CD14-positive monocyte (primary cell): ENCODE measurements at regions of chr13 and their contacts with region 1.

Region 1: DNA sequence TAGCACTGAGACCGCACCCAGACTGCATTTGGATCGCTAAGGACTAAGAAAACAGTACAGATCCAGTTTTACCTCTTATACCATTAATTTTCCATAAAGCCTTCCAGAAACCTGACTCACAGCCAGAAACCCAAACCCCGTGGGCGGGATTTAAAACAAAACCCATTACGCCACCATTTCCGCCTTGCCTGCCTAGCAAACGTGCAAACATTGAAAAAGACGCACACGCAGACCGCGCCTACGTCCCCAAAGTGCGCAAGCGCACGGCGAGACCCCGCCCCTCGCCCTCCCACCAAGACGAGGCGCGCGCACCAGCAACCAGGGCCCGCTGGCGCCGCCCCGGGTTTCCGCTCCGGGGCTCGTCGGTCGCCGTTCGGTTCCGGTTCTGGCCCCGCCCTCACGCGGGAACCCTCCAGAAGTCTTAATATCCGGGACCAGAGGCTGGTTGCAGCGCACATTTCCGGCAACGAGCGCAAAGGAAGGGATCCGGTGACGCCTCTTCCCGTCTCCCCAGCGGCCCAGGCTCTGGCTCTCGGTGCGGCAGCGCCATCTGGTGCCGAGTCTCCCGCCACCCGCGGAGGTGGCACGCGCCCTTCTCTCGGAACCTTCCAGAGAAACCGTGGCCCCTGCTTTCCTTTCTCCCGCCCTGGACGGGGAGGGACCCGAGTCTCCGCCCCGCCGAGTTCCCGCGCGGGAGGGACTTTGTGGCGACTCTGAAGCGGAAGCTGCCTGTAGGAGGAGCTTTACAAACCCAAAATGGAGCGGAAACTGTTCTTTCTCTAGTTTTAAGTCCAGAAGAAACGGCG is 256.9 kb upstream of the STARD13 start:
- DNase-seq: peak; percentile 97 to 99 (median 98)
- H3K4me3 ChIP-seq: peak overlapping the region; percentile 76 to 98 (median 78)
- H3K4me3 Mint-ChIP-seq: peak overlapping the region; percentile 85 to 89
- H3K27ac ChIP-seq: peak overlapping the region; percentile 94 to 95
- H3K27ac Mint-ChIP-seq: peak overlapping the region; percentile 96 to 99 (median 99)
- H3K4me1 ChIP-seq: peaks cover 40 to 42% of the 10 kb centered on the region in 2 donors
- H3K4me1 Mint-ChIP-seq: peaks cover 40% of the 10 kb centered on the region
- H3K27me3 ChIP-seq: no peaks in the 10 kb centered on the region
- H3K27me3 Mint-ChIP-seq: no peaks in the 10 kb centered on the region
- CTCF ChIP-seq: peak; percentile 77

Region 2: DNA sequence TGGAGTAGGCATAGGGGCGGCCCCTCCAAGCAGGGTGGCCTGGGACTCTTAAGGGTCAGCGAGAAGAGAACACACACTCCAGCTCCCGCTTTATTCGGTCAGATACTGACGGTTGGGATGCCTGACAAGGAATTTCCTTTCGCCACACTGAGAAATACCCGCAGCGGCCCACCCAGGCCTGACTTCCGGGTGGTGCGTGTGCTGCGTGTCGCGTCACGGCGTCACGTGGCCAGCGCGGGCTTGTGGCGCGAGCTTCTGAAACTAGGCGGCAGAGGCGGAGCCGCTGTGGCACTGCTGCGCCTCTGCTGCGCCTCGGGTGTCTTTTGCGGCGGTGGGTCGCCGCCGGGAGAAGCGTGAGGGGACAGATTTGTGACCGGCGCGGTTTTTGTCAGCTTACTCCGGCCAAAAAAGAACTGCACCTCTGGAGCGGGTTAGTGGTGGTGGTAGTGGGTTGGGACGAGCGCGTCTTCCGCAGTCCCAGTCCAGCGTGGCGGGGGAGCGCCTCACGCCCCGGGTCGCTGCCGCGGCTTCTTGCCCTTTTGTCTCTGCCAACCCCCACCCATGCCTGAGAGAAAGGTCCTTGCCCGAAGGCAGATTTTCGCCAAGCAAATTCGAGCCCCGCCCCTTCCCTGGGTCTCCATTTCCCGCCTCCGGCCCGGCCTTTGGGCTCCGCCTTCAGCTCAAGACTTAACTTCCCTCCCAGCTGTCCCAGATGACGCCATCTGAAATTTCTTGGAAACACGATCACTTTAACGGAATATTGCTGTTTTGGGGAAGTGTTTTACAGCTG is 1227.1 kb before region 1 on chr13 and contains the starts of genes BRCA2 and ZAR1L:
- intact Hi-C with region 1: loop called in 1 of 2 experiments (anchors 10 kb)
- DNase-seq: peak; percentile 84 to 94 (median 87)
- H3K4me3 ChIP-seq: peak within 1 kb of the TSS; percentile 78 to 93 (median 90)
- H3K4me3 Mint-ChIP-seq: peak within 1 kb of the TSS; percentile 93 to 96
- H3K27ac ChIP-seq: peak within 1 kb of the TSS; percentile 95 to 99
- H3K27ac Mint-ChIP-seq: peak within 1 kb of the TSS; percentile 99 to 100 (median 100)
- H3K4me1 ChIP-seq: peaks cover 32 to 40% of the 10 kb centered on the region in 2 donors
- H3K4me1 Mint-ChIP-seq: peaks cover 25% of the 10 kb centered on the region
- H3K27me3 ChIP-seq: no peaks in the 10 kb centered on the region
- H3K27me3 Mint-ChIP-seq: peaks cover 0 to 3% (median 0%) of the 10 kb centered on the region in 3 donors
- CTCF ChIP-seq: no peak
- polyA plus RNA-seq, gene BRCA2: 0.32 to 0.36 (median 0.36) TPM
- polyA plus RNA-seq, gene ZAR1L: not detected

Region 3: DNA sequence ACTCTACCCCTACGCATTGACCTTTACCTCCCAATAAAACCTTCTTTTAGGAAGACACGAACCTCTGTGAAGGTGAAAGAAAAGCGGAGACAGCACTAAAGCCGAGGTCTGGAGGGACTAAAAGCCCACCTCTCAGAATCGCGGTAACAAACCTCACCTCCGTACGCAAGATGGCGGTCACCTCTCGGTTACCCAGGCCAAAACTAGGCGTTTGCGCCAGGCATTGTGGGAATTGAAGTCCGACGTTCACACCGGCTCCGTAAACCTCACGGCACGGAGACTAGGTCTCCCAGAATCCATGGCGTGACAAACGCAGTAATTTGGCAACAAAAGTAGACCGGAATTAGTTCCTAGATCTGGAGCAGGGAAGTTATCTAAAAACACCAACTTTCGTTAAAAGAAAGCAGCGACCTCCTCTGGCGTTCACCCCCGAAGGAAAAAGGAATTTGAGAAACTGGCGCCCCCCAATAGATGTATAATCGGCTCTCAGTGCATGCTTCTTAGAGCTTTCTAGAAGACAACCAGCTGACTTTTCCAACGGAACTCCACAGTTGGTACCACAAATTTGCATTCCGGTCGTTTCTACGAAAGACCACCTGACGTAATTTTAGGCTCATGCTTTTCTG is 1003.8 kb before region 1 on chr13 and contains the start of gene N4BP2L2:
- intact Hi-C with region 1: loop called (anchors 5 kb)
- DNase-seq: peak; percentile 93 to 97 (median 96)
- H3K4me3 ChIP-seq: peak within 1 kb of the TSS; percentile 80 to 97 (median 95)
- H3K4me3 Mint-ChIP-seq: peak within 1 kb of the TSS; percentile 95 to 96
- H3K27ac ChIP-seq: peak within 1 kb of the TSS; percentile 96 to 99
- H3K27ac Mint-ChIP-seq: peak within 1 kb of the TSS; percentile 98 to 100 (median 99)
- H3K4me1 ChIP-seq: peaks cover 18 to 38% of the 10 kb centered on the region in 2 donors
- H3K4me1 Mint-ChIP-seq: peaks cover 41% of the 10 kb centered on the region
- H3K27me3 ChIP-seq: no peaks in the 10 kb centered on the region
- H3K27me3 Mint-ChIP-seq: peaks cover 0 to 3% (median 0%) of the 10 kb centered on the region in 3 donors
- CTCF ChIP-seq: peak; percentile 9
- polyA plus RNA-seq, gene N4BP2L2: 94.2 to 105 (median 96.4) TPM

Region 4: DNA sequence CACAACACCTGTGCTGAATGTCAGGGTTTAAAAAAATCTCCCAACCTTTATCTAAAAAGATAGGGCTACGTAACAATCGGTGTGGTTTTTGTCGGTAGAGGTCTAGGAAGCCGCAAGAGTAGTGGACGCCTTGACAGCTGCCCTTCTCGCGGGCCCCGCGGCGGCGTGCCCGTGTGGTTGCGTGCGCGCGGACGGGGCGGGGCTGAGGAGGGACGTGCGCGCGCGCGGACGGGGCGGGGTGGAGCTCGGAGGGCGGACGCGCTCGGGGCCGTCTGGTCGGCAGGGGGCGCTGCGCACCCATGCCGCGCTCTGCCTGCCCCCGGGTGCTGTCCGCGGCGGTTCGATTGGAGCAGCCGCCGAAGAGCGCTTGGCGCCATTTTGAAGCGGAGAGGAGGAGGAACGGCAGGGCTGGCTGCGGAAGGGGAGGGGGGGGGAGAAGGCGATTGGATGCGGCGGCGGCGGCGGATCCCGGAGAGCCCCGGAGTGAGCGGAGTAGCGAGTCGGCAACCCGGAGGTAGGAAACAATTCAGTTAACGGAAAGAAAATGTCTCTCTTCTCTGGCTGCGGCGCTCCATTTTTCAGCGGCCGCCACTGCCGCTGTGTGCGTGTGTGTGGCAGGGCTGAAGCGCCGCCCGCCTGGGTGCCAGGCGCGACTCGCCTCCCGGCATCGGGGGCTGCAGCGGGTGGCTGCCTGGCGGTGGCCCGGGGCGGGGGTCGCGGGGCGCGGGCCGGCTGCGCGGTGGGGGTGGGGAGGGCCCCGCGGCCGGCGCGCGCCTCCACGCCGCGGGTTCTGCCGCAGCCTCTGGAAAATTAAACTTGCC is 956.2 kb before region 1 on chr13 and contains the start of gene PDS5B:
- intact Hi-C with region 1: loop called (anchors 5 to 10 kb)
- DNase-seq: peak; percentile 93 to 96 (median 95)
- H3K4me3 ChIP-seq: peak within 1 kb of the TSS; percentile 87 to 98 (median 88)
- H3K4me3 Mint-ChIP-seq: peak within 1 kb of the TSS; percentile 98
- H3K27ac ChIP-seq: peak within 1 kb of the TSS; percentile 81 to 84
- H3K27ac Mint-ChIP-seq: peak within 1 kb of the TSS; percentile 86 to 94 (median 93)
- H3K4me1 ChIP-seq: peaks cover 17 to 27% of the 10 kb centered on the region in 2 donors
- H3K4me1 Mint-ChIP-seq: peaks cover 39% of the 10 kb centered on the region
- H3K27me3 ChIP-seq: peaks cover 2 to 3% of the 10 kb centered on the region in 2 donors
- H3K27me3 Mint-ChIP-seq: peaks cover 5 to 13% (median 7%) of the 10 kb centered on the region in 3 donors
- CTCF ChIP-seq: peak; percentile 85
- polyA plus RNA-seq, gene PDS5B: 9.0 to 33.0 (median 21.0) TPM

Region 5: GRCh38 chr13:33349986-33350826 is 192.3 kb before region 1 on chr13:
- intact Hi-C with region 1: loop called (anchors 5 kb)
- DNase-seq: peak in 1 of 3 donors; percentile 9
- H3K4me3 ChIP-seq: peak overlapping the region; percentile 59 to 81 (median 62)
- H3K4me3 Mint-ChIP-seq: peak overlapping the region; percentile 88 to 94
- H3K27ac ChIP-seq: peak overlapping the region in 1 of 2 donors; percentile 53
- H3K27ac Mint-ChIP-seq: peak overlapping the region in 6 of 7 donors; percentile 70 to 88 (median 79)
- H3K4me1 ChIP-seq: peaks cover 48 to 57% of the 10 kb centered on the region in 2 donors
- H3K4me1 Mint-ChIP-seq: peaks cover 56% of the 10 kb centered on the region
- H3K27me3 ChIP-seq: no peaks in the 10 kb centered on the region
- H3K27me3 Mint-ChIP-seq: peaks cover 0 to 3% (median 2%) of the 10 kb centered on the region in 3 donors
- CTCF ChIP-seq: no peak

Region 6: DNA sequence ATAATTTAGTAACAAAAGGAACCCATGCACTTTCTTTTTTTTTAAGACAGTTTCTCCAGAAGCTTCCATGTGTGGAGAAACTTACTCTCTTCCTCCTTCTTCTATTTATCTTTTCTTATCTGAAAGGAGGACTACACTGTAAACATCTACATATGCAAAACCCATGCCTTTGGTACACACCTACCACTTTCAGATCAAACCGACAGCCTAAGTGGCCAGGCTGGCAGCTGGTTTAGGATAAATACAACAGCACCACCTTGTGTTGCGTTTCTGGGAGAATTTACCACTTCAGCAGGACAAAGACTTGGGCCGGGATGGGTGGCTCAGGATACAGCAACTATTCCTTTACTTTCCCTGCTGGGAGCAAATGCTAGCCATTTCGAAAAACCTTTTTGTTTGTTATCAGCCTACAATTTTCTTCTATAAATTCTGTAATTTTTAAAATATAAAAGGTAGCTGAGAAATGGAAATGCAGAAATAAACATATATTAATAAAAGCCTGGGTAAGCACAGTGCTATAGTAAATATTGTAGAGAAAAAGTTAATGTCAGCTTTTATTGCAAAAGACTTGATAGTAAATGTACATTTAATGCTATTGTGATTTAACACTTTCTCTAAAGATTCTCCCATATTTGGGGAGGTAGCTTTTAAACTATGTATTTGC is 181.4 kb after region 1 on chr13:
- intact Hi-C with region 1: loop called (anchors 10 kb)
- DNase-seq: peak; percentile 57 to 73 (median 69)
- H3K4me3 ChIP-seq: no peak overlapping the region
- H3K4me3 Mint-ChIP-seq: no peak overlapping the region
- H3K27ac ChIP-seq: no peak overlapping the region
- H3K27ac Mint-ChIP-seq: peak overlapping the region in 1 of 7 donors; percentile 3
- H3K4me1 ChIP-seq: peaks cover 42 to 44% of the 10 kb centered on the region in 2 donors
- H3K4me1 Mint-ChIP-seq: peaks cover 47% of the 10 kb centered on the region
- H3K27me3 ChIP-seq: no peaks in the 10 kb centered on the region
- H3K27me3 Mint-ChIP-seq: no peaks in the 10 kb centered on the region
- CTCF ChIP-seq: peak; percentile 79

Region 7: DNA sequence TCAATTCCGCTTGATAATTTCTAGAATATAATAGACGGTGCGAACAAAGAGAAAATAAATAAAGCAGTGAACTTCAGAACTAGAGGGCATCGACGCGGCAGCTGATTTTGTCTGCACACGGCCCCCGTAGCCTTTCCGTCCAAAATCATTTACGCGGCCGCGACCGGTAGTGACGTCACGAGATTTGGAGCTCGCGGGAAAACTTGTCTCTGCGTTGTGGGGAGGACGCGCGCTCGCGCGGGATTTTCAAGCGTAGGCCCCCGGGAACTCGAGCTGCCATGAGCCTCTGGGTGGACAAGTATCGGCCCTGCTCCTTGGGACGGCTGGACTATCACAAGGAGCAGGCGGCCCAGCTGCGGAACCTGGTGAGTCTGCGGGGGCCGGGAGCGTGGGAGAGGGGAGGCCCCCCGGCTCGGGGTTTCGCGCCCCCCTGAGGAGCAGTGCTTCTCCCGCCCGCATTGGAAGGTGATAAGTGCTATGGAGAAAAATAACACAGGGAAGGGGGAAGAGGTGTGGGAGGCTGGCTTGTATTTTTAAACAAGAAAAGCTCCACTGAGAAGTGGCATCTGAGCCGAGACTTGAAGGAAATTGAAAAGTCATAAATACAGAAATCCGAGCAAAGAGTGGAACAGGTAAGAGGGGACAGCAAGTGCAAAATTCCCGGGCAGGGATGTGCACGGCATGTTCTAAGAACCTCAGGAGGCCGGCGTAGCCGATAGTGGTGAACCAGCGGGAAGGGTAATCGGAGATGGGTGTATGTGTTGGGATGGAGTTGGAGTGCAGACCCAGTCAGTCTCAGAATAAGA is 275.6 kb after region 1 on chr13 and contains the start of gene RFC3:
- intact Hi-C with region 1: loop called (anchors 5 to 10 kb)
- DNase-seq: peak; percentile 83 to 93 (median 90)
- H3K4me3 ChIP-seq: peak within 1 kb of the TSS; percentile 71 to 95 (median 92)
- H3K4me3 Mint-ChIP-seq: peak within 1 kb of the TSS; percentile 95 to 98
- H3K27ac ChIP-seq: peak within 1 kb of the TSS; percentile 58 to 82
- H3K27ac Mint-ChIP-seq: peak within 1 kb of the TSS; percentile 88 to 95 (median 89)
- H3K4me1 ChIP-seq: peaks cover 12 to 15% of the 10 kb centered on the region in 2 donors
- H3K4me1 Mint-ChIP-seq: peaks cover 10% of the 10 kb centered on the region
- H3K27me3 ChIP-seq: peaks cover 0 to 7% of the 10 kb centered on the region in 2 donors
- H3K27me3 Mint-ChIP-seq: peaks cover 4 to 9% (median 5%) of the 10 kb centered on the region in 3 donors
- CTCF ChIP-seq: no peak
- polyA plus RNA-seq, gene RFC3: 2.5 to 5.3 (median 4.1) TPM